Adrenal gland (tissue), 19 donors: ENCODE measurements at regions of chr18 and their contacts with region 1.

Region 1: GRCh38 chr18:69727912-69728572 is 219.6 kb downstream of the CD226 start:
- DNase-seq: no peak
- H3K4me3 ChIP-seq: no peak overlapping the region
- H3K27ac ChIP-seq: no peak overlapping the region
- H3K4me1 ChIP-seq: no peaks in the 10 kb centered on the region
- H3K27me3 ChIP-seq: no peaks in the 10 kb centered on the region
- CTCF ChIP-seq: no peak
- POLR2A ChIP-seq: no peak

Region 2: DNA sequence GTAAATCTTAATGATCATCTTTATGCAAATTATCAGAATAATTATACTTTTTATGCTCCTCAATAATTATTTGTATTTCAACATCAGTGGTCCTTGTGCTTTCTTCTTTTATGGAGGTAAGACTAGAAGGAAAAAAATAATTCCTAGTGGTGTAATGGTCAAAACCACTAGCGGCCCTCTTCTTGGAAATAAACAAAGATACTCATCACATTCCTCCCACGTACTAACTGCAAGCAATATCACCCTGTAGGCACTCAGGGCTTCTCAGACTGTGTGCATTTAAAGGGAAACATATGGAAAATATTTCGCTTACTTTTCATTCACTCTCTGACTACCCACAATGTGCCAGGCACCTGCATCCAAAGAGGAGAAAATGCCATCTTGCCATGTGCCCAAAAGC is 63.6 kb before region 1 on chr18:
- intact Hi-C with region 1: loop called in 1 of 2 experiments (anchors 10 kb)
- DNase-seq: no peak
- H3K4me3 ChIP-seq: no peak overlapping the region
- H3K27ac ChIP-seq: no peak overlapping the region
- H3K4me1 ChIP-seq: no peaks in the 10 kb centered on the region
- H3K27me3 ChIP-seq: no peaks in the 10 kb centered on the region
- CTCF ChIP-seq: no peak
- POLR2A ChIP-seq: no peak